Activated CD4-positive, alpha-beta memory T cell treated with anti-CD3 and anti-CD28 coated beads for 36 hours (primary cell): ENCODE measurements at regions of chr11 and their contacts with region 1.

Region 1: GRCh38 chr11:123407130-123407995 is 22.7 kb upstream of the GRAMD1B start:
- DNase-seq: peak; percentile 72
- H3K4me3 Mint-ChIP-seq: peak overlapping the region; percentile 55
- H3K27ac Mint-ChIP-seq: peak overlapping the region; percentile 65
- H3K4me1 Mint-ChIP-seq: peaks cover 33% of the 10 kb centered on the region
- H3K27me3 Mint-ChIP-seq: peaks cover 6% of the 10 kb centered on the region

Region 2: GRCh38 chr11:123357961-123358841 is 49.2 kb before region 1 on chr11:
- CTCF ChIA-PET with region 1: interaction called, 18 read pairs
- POLR2A ChIA-PET with region 1: no interaction called
- intact Hi-C with region 1: loop called (anchors 1 kb)
- DNase-seq: peak; percentile 71
- H3K4me3 Mint-ChIP-seq: peak overlapping the region; percentile 82
- H3K27ac Mint-ChIP-seq: peak overlapping the region; percentile 70
- H3K4me1 Mint-ChIP-seq: peaks cover 36% of the 10 kb centered on the region
- H3K27me3 Mint-ChIP-seq: peaks cover 27% of the 10 kb centered on the region

Region 3: DNA sequence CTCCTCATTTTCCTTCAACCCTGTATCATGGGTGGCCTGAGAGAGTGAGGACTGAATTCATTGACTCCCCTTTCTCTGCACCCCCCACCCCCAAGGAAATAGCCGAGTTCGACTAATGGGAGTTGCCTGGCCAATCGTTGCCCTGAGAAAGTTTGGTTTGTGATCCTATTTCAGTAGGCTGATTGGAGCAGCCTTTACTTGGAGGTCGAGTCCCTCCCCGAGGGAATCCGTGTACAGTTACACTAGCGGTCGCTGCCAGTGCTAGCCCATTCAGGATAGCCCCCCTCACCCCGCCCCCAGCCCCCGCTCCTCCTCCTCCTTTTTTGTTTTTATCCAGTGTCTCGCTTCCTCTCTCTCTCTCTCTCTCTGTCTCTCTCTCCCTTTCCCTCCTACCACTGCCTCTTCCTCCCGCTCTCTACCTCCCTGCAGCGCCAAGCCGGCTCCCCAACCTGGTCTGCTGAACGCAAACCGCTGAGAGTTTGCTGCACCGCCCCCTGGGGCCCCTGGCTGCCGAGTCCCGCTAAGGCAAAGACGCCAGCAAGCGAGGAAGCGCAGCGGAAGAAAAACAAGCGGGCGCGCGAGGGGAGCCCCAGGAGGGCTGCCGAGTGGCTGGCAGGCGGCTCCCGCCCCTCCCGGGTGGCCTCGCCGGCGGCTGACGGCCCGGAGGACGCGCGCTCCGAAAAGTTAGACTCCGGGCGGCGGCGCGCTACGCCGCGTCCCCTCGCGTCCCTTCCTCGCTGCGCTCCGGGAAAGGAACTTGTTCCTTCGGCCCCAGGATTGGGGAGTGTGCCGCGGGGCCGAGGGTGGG is 22.8 kb after region 1 on chr11 and contains the start of gene GRAMD1B:
- CTCF ChIA-PET with region 1: interaction called, 54 read pairs
- POLR2A ChIA-PET with region 1: no interaction called
- intact Hi-C with region 1: loop called (anchors 1 kb)
- DNase-seq: peak; percentile 85
- H3K4me3 Mint-ChIP-seq: peak within 1 kb of the TSS; percentile 85
- H3K27ac Mint-ChIP-seq: peak within 1 kb of the TSS; percentile 90
- H3K4me1 Mint-ChIP-seq: peaks cover 40% of the 10 kb centered on the region
- H3K27me3 Mint-ChIP-seq: no peaks in the 10 kb centered on the region
- total RNA-seq, gene GRAMD1B: 36.8 to 39.0 TPM

Region 4: DNA sequence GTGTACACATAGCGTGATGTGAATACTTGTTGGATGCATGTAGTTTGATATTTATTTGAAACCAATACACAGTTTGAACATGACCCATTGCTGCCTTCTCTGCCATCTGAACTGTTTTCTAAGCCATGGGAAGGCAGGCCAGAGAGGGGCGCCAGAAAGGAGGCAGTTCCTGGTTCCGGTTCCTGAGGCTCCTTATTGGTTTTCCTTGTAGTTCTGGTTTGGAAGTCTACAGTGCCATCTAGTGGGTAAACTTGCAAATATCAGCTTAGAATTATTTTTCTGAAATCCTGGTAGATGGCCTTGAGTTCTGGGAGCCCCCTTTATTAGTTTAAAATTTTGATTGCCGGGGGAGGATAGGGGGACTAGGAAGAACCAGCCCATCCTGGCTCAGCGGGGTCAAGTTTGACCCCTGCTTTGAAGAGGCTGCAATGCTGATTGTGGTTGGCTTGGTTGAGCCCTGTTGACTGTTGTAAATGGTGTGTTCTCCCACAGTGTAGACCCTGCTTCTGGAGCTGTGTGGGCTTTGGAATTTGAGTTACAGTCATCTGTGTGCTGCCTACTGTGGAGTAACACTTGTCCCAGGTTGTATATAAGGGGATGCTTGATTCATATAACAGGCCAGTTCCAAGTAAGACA is 71.1 kb after region 1 on chr11:
- CTCF ChIA-PET with region 1: interaction called, 273 read pairs
- POLR2A ChIA-PET with region 1: no interaction called
- intact Hi-C with region 1: loop called (anchors 1 kb)
- DNase-seq: peak; percentile 38
- H3K4me3 Mint-ChIP-seq: peak overlapping the region; percentile 27
- H3K27ac Mint-ChIP-seq: peak overlapping the region; percentile 56
- H3K4me1 Mint-ChIP-seq: peaks cover 43% of the 10 kb centered on the region
- H3K27me3 Mint-ChIP-seq: no peaks in the 10 kb centered on the region

Region 5: GRCh38 chr11:123580557-123581275 is 173.4 kb after region 1 on chr11:
- CTCF ChIA-PET with region 1: interaction called, 20 read pairs
- POLR2A ChIA-PET with region 1: no interaction called
- intact Hi-C with region 1: loop called (anchors 5 kb)
- DNase-seq: peak; percentile 79
- H3K4me3 Mint-ChIP-seq: no peak overlapping the region
- H3K27ac Mint-ChIP-seq: no peak overlapping the region
- H3K4me1 Mint-ChIP-seq: peaks cover 12% of the 10 kb centered on the region
- H3K27me3 Mint-ChIP-seq: no peaks in the 10 kb centered on the region